Activated CD4-positive, alpha-beta T cell treated with anti-CD3 and anti-CD28 coated beads, Interleukin-2, amount 10 ng/mL, durations not matched to agents 24 days and 14 days (primary cell): ENCODE measurements at regions of chr13 and their contacts with region 1.

Region 1: DNA sequence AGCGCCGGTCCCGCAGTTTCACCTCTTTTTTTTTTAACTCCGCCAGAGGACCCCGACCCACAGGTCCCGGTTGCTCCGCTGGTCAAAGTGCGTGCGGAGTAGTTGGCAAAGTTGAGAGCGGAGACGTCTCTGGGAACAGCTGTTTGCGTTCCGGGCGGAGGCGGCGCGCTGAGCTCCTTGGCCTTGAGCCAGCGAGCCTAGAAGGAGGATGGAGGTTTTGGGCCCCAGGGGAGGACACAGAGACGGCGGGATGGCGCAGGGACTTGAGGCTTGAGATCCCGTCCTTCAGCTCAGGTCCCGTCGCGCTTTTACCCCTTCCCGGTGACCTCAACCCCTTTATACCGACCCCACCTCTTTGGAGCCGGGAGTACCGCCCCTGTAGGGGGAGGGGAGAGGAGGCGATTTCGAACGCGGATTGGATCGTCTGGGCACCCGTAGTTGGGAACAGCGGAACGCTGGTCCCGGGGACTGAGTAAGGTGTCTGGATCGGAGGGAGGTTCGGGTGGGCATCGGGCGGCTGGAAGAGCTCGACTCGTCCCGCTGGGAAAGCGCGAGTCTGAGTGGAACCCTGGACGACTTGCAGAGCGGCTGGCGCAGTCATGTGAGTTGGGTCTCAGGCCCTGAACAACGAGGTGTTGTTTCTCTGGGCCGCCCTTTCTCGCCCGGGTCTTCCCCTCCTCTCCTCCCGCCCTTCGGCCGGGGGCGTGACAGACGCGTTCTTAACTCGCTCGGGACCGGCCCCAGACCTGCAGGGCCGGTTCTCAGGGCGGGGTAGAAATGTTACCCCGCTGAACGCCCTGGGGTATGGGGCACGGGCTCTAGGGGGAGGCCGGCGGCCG is at the start of gene WBP4:
- DNase-seq: peak; percentile 96
- H3K4me3 Mint-ChIP-seq: peak within 1 kb of the TSS; percentile 100
- H3K27ac Mint-ChIP-seq: peak within 1 kb of the TSS; percentile 100
- H3K4me1 Mint-ChIP-seq: peaks cover 46% of the 10 kb centered on the region
- H3K27me3 Mint-ChIP-seq: peaks cover 5% of the 10 kb centered on the region
- total RNA-seq, gene WBP4: 13.3 and 14.1 TPM in 2 replicates

Region 2: GRCh38 chr13:40764587-40765403 is 296.5 kb before region 1 on chr13:
- intact Hi-C with region 1: loop called (anchors 2 kb)
- DNase-seq: peak; percentile 69
- H3K4me3 Mint-ChIP-seq: peak overlapping the region; percentile 59
- H3K27ac Mint-ChIP-seq: peak overlapping the region; percentile 96
- H3K4me1 Mint-ChIP-seq: peaks cover 42% of the 10 kb centered on the region
- H3K27me3 Mint-ChIP-seq: no peaks in the 10 kb centered on the region

Region 3: DNA sequence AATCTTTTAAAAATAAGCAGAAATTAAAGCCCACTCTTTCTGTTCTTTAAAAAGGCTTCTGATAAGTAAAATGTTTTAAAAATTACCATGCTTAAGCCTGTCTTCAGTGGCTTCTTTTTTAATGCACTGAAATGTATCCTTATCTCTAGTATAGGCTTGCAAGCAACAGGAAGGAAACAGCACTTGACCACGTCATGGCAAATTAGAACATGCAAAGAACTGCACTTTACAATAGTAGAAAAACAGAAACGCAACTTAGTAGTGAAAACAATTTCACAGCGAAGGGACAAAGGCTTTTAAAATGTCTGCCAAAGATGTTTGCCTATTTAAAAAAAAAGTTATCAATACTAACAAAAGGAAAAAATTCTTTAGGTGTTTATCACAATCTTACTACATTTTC is 78.5 kb before region 1 on chr13:
- intact Hi-C with region 1: loop called (anchors 1 kb)
- DNase-seq: peak; percentile 90
- H3K4me3 Mint-ChIP-seq: peak overlapping the region; percentile 76
- H3K27ac Mint-ChIP-seq: peak overlapping the region; percentile 91
- H3K4me1 Mint-ChIP-seq: peaks cover 56% of the 10 kb centered on the region
- H3K27me3 Mint-ChIP-seq: no peaks in the 10 kb centered on the region

Region 4: DNA sequence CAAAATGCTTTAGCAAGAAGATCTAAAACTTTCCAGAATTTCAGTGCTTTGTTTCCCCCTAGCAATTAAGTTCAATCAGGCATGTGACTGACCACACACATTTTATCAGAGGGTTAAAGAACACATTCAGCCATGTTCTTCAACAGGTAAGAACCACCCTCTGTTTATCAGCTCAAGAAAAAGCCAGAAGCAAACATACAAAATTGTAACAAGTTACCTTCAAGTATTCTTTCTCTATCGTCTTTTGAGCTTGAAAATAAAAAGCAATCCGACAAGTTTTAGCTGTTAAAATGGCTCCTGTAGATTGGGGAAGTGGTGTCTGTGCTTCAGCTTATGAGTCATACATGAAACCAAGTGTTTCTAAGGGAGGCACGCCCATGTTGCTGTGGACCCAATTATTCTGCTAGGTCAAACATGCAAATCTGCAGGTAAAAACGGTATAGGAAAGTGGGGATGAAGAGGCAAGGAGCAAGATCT is 42.2 kb before region 1 on chr13 and contains the start of gene ELF1:
- intact Hi-C with region 1: loop called (anchors 1 kb)
- DNase-seq: peak; percentile 89
- H3K4me3 Mint-ChIP-seq: peak within 1 kb of the TSS; percentile 95
- H3K27ac Mint-ChIP-seq: peak within 1 kb of the TSS; percentile 98
- H3K4me1 Mint-ChIP-seq: peaks cover 40% of the 10 kb centered on the region
- H3K27me3 Mint-ChIP-seq: no peaks in the 10 kb centered on the region
- total RNA-seq, gene ELF1: 65.0 and 65.8 TPM in 2 replicates

Region 5: GRCh38 chr13:41085961-41086585 is 24.8 kb after region 1 on chr13:
- intact Hi-C with region 1: no loop called
- DNase-seq: no peak
- H3K4me3 Mint-ChIP-seq: no peak overlapping the region
- H3K27ac Mint-ChIP-seq: no peak overlapping the region
- H3K4me1 Mint-ChIP-seq: peaks cover 2% of the 10 kb centered on the region
- H3K27me3 Mint-ChIP-seq: no peaks in the 10 kb centered on the region

Region 6: GRCh38 chr13:41117869-41118268 is 56.6 kb after region 1 on chr13:
- intact Hi-C with region 1: no loop called
- DNase-seq: no peak
- H3K4me3 Mint-ChIP-seq: no peak overlapping the region
- H3K27ac Mint-ChIP-seq: no peak overlapping the region
- H3K4me1 Mint-ChIP-seq: no peaks in the 10 kb centered on the region
- H3K27me3 Mint-ChIP-seq: no peaks in the 10 kb centered on the region

Region 7: DNA sequence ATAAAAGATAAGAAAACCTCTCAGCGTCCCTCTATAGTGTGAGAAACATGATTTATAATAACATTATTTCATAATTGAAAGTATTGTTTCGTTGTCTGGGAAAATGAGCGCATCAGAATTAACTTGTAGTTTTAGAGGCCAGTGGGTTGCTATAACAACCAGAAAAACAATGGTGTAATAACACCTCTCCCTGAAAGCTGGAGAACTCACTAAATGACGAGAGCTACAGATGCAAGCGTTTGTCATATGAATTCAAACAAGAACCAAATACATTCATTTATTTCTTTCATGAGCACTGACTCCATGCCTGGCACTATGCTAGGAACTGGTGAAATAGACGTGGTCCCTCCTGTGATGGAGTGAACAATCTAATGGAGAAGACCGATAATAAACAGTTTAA is 116.7 kb after region 1 on chr13:
- intact Hi-C with region 1: no loop called
- DNase-seq: no peak
- H3K4me3 Mint-ChIP-seq: no peak overlapping the region
- H3K27ac Mint-ChIP-seq: no peak overlapping the region
- H3K4me1 Mint-ChIP-seq: peaks cover 3% of the 10 kb centered on the region
- H3K27me3 Mint-ChIP-seq: no peaks in the 10 kb centered on the region

Region 8: GRCh38 chr13:41193919-41194824 is 132.9 kb after region 1 on chr13 and contains the start of gene KBTBD7:
- intact Hi-C with region 1: loop called (anchors 1 kb)
- DNase-seq: peak; percentile 97
- H3K4me3 Mint-ChIP-seq: peak within 1 kb of the TSS; percentile 90
- H3K27ac Mint-ChIP-seq: peak within 1 kb of the TSS; percentile 95
- H3K4me1 Mint-ChIP-seq: peaks cover 40% of the 10 kb centered on the region
- H3K27me3 Mint-ChIP-seq: no peaks in the 10 kb centered on the region
- total RNA-seq, gene KBTBD7: 5.6 and 6.2 TPM in 2 replicates

Region 9: GRCh38 chr13:41310963-41311606 is 249.8 kb after region 1 on chr13 and contains the start of gene NAA16:
- intact Hi-C with region 1: loop called (anchors 2 kb)
- DNase-seq: peak; percentile 98
- H3K4me3 Mint-ChIP-seq: peak within 1 kb of the TSS; percentile 94
- H3K27ac Mint-ChIP-seq: peak within 1 kb of the TSS; percentile 93
- H3K4me1 Mint-ChIP-seq: peaks cover 37% of the 10 kb centered on the region
- H3K27me3 Mint-ChIP-seq: no peaks in the 10 kb centered on the region
- total RNA-seq, gene NAA16: 30.3 and 31.2 TPM in 2 replicates

Region 10: GRCh38 chr13:41465241-41465847 is 404.1 kb after region 1 on chr13:
- intact Hi-C with region 1: loop called (anchors 2 kb)
- DNase-seq: peak; percentile 96
- H3K4me3 Mint-ChIP-seq: peak overlapping the region; percentile 88
- H3K27ac Mint-ChIP-seq: peak overlapping the region; percentile 99
- H3K4me1 Mint-ChIP-seq: peaks cover 79% of the 10 kb centered on the region
- H3K27me3 Mint-ChIP-seq: no peaks in the 10 kb centered on the region